ENCODE measurements at regions of chr7 and their contacts with region 1.

Region 1: GRCh38 chr7:77481615-77482402 is 55.3 kb upstream of the PTPN12 start:
- DNase-seq: peak; percentile 79
- H3K4me3 Mint-ChIP-seq: peak overlapping the region; percentile 46
- H3K27ac Mint-ChIP-seq: peak overlapping the region; percentile 99
- H3K4me1 Mint-ChIP-seq: peaks cover 37% of the 10 kb centered on the region
- H3K27me3 Mint-ChIP-seq: no peaks in the 10 kb centered on the region
- CTCF ChIP-seq: no peak

Region 2: GRCh38 chr7:77415823-77416622 is 65.8 kb before region 1 on chr7 and contains the start of gene GSAP:
- CTCF ChIA-PET with region 1: interaction called, 3 read pairs
- intact Hi-C with region 1: loop called (anchors 10 kb)
- DNase-seq: peak; percentile 67
- H3K4me3 Mint-ChIP-seq: peak within 1 kb of the TSS; percentile 70
- H3K27ac Mint-ChIP-seq: peak within 1 kb of the TSS; percentile 77
- H3K4me1 Mint-ChIP-seq: peaks cover 44% of the 10 kb centered on the region
- H3K27me3 Mint-ChIP-seq: no peaks in the 10 kb centered on the region
- CTCF ChIP-seq: no peak
- total RNA-seq, gene GSAP: 23.3 and 26.0 TPM in 2 replicates

Region 3: DNA sequence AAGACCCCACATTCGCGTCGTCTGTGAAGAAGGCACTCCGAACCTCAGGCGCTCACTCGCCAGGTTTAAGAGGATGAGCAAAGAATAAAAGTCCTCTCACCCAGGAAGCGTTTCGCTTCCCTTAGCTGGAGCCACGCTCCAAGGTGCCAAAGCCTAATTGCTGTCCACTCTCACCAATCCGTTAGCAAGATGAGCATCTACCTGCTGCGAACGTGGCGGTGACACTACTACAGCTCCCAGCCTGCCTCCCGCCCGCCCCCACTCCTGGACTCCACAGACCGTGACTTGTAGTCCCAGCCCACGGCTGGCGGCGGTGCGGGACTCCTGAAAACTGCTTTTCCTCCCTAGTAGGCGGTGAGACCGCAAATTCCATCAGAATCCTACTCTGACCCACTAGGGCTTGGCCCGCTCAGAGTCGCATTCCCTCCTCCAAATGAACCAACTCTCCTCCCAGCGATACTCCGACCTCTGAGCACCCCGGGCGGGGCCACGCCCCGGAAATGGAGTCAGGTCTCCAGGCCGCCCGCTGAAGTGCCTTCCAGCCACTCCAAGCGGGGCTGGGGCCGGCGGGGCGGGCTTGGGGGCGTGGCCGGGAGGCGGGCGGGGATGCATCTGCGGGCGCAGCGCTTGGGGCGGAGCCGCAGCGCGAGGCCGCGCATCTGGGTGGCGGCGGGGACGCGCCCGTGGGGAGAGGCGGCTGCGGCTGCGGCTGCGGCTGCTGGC is 54.8 kb after region 1 on chr7:
- CTCF ChIA-PET with region 1: no interaction called
- intact Hi-C with region 1: loop called (anchors 5 kb)
- DNase-seq: peak; percentile 95
- H3K4me3 Mint-ChIP-seq: peak overlapping the region; percentile 86
- H3K27ac Mint-ChIP-seq: peak overlapping the region; percentile 67
- H3K4me1 Mint-ChIP-seq: peaks cover 10% of the 10 kb centered on the region
- H3K27me3 Mint-ChIP-seq: no peaks in the 10 kb centered on the region
- CTCF ChIP-seq: no peak

Region 4: GRCh38 chr7:77587272-77587671 is 105.5 kb after region 1 on chr7:
- CTCF ChIA-PET with region 1: no interaction called
- intact Hi-C with region 1: no loop called
- DNase-seq: no peak
- H3K4me3 Mint-ChIP-seq: no peak overlapping the region
- H3K27ac Mint-ChIP-seq: no peak overlapping the region
- H3K4me1 Mint-ChIP-seq: no peaks in the 10 kb centered on the region
- H3K27me3 Mint-ChIP-seq: no peaks in the 10 kb centered on the region
- CTCF ChIP-seq: no peak

Measured in Calu3 (cell line).